WTC11 (cell line): ENCODE measurements at regions of chr4 and their contacts with region 1.

Region 1: GRCh38 chr4:139295206-139295941 is 5.9 kb upstream of the NAA15 start:
- DNase-seq: peak; percentile 97
- ATAC-seq: peak; percentile 93
- H3K4me3 Mint-ChIP-seq: peak overlapping the region; percentile 94
- H3K27ac Mint-ChIP-seq: peak overlapping the region; percentile 82
- H3K4me1 Mint-ChIP-seq: peaks cover 31% of the 10 kb centered on the region; the same call in 1 of the 2 replicates
- H3K27me3 Mint-ChIP-seq: no peaks in the 10 kb centered on the region
- CTCF ChIP-seq: peak; percentile 82

Region 2: GRCh38 chr4:139083956-139084803 is 211.2 kb before region 1 on chr4:
- CTCF ChIA-PET with region 1: interaction called, 13 read pairs
- POLR2A ChIA-PET with region 1: no interaction called
- DNase-seq: peak; percentile 90
- ATAC-seq: peak; percentile 63
- H3K4me3 Mint-ChIP-seq: peak overlapping the region; percentile 96
- H3K27ac Mint-ChIP-seq: peak overlapping the region; percentile 99
- H3K4me1 Mint-ChIP-seq: peaks cover 30% of the 10 kb centered on the region
- H3K27me3 Mint-ChIP-seq: no peaks in the 10 kb centered on the region; the same call in 1 of the 2 replicates
- CTCF ChIP-seq: no peak

Region 3: DNA sequence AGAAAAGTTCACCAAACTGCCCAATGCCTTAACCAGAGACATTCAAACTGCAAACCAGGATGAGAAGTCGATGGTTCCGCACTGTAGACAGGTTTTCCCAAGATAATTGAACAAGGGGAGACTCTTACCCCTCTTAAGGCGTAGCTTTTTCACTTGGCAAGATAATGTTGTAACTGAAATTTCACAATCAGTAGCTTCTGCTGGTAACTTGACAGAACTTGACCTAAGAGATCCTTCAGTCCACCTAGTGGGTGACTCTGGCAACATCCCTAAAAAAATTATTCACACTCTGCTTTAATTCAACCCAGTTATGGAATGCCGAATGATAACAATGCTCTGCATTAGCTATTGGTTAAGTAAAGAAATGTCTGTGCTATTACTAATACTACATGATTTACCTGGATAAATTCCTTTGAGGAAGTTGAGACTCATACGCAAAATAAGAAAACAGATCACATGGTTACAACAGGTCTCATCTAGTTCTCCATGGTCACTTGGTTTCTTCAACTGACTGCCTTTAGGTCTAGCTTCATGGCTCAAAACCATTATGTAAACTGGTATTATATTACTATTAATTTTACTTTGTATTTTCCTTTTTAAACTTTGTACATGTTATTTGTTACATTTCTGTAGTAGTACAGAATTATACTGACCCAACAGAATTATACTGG is 127.5 kb before region 1 on chr4:
- CTCF ChIA-PET with region 1: interaction called, 16 read pairs
- POLR2A ChIA-PET with region 1: interaction called, 5 read pairs
- DNase-seq: no peak
- ATAC-seq: peak; percentile 56
- H3K4me3 Mint-ChIP-seq: no peak overlapping the region
- H3K27ac Mint-ChIP-seq: peak overlapping the region; percentile 96
- H3K4me1 Mint-ChIP-seq: peaks cover 75% of the 10 kb centered on the region
- H3K27me3 Mint-ChIP-seq: no peaks in the 10 kb centered on the region
- CTCF ChIP-seq: no peak

Region 4: GRCh38 chr4:139229534-139230039 is 65.8 kb before region 1 on chr4:
- CTCF ChIA-PET with region 1: interaction called, 18 read pairs
- POLR2A ChIA-PET with region 1: interaction called, 8 read pairs
- DNase-seq: no peak
- ATAC-seq: peak; percentile 62
- H3K4me3 Mint-ChIP-seq: no peak overlapping the region
- H3K27ac Mint-ChIP-seq: no peak overlapping the region
- H3K4me1 Mint-ChIP-seq: peaks cover 26% of the 10 kb centered on the region
- H3K27me3 Mint-ChIP-seq: no peaks in the 10 kb centered on the region
- CTCF ChIP-seq: peak; percentile 41

Region 5: GRCh38 chr4:139312552-139313332 is 17.4 kb after region 1 on chr4:
- CTCF ChIA-PET with region 1: interaction called, 10 read pairs
- POLR2A ChIA-PET with region 1: no interaction called
- DNase-seq: no peak
- ATAC-seq: no peak
- H3K4me3 Mint-ChIP-seq: no peak overlapping the region
- H3K27ac Mint-ChIP-seq: peak overlapping the region; percentile 94
- H3K4me1 Mint-ChIP-seq: peaks cover 63% of the 10 kb centered on the region
- H3K27me3 Mint-ChIP-seq: no peaks in the 10 kb centered on the region
- CTCF ChIP-seq: no peak

Region 6: GRCh38 chr4:139484783-139485318 is 189.5 kb after region 1 on chr4:
- CTCF ChIA-PET with region 1: no interaction called
- POLR2A ChIA-PET with region 1: no interaction called
- DNase-seq: no peak
- ATAC-seq: peak; percentile 67
- H3K4me3 Mint-ChIP-seq: no peak overlapping the region
- H3K27ac Mint-ChIP-seq: no peak overlapping the region
- H3K4me1 Mint-ChIP-seq: 0 out of 2 replicates have a peak, but pooled peaks cover 2% of the 10 kb centered on the region
- H3K27me3 Mint-ChIP-seq: no peaks in the 10 kb centered on the region; the same call in 1 of the 2 replicates
- CTCF ChIP-seq: no peak